ENCODE measurements at regions of chr2 and their contacts with region 1.

Region 1: DNA sequence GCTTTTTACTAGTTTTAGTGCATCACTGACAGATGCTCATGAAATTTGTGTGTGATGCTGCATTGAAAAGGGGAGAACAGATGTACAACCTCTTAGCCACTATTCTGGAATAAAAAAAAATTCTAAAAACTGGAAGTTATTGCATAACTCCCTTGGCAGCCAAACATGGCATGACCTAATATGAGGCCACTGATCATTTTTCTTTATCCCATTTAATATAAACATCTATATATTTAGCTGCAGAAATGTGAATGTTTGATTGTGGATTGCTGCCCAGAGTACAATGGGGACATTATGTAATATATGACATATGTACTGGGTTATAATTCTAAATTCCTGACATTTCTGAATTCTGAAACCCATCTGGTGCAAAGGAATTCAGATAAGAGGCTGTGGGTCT is 86.5 kb downstream of the CDCA7 start:
- DNase-seq: no peak
- ATAC-seq: no peak
- H3K4me3 ChIP-seq: no peak overlapping the region
- H3K27ac ChIP-seq: no peak overlapping the region
- H3K4me1 ChIP-seq: 0 out of 2 replicates have a peak, but pooled peaks cover under 1% of the 10 kb centered on the region
- H3K27me3 ChIP-seq: no peaks in the 10 kb centered on the region
- CTCF ChIP-seq: no peak

Region 2: GRCh38 chr2:173307293-173307692 is 133.9 kb before region 1 on chr2:
- CTCF ChIA-PET with region 1: no interaction called
- POLR2A ChIA-PET with region 1: no interaction called
- intact Hi-C with region 1: no loop called
- DNase-seq: no peak
- ATAC-seq: no peak
- H3K4me3 ChIP-seq: no peak overlapping the region
- H3K27ac ChIP-seq: no peak overlapping the region
- H3K4me1 ChIP-seq: no peaks in the 10 kb centered on the region
- H3K27me3 ChIP-seq: no peaks in the 10 kb centered on the region
- CTCF ChIP-seq: no peak

Region 3: DNA sequence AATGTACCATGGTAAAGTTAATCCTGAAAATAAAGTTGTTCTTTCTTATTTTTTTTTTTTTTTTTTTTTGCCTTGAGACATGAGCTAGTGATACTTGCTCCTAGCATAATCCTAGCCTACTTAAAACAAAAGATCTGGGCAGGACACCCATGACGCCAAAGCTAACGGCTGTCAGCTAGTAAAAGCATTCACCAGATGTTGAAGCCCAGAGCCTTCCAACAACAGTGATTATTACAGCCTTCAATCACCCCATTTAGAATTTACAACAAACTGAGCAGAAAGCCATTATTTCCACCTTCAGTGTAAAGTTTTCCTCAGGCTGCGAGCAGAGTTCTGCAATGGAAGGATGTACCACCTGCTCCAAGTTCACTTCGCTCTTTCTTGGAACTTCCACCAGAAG is 264.4 kb after region 1 on chr2:
- CTCF ChIA-PET with region 1: no interaction called
- POLR2A ChIA-PET with region 1: interaction called, 16 read pairs
- intact Hi-C with region 1: no loop called
- DNase-seq: no peak
- ATAC-seq: no peak
- H3K4me3 ChIP-seq: no peak overlapping the region
- H3K27ac ChIP-seq: no peak overlapping the region
- H3K4me1 ChIP-seq: no peaks in the 10 kb centered on the region
- H3K27me3 ChIP-seq: no peaks in the 10 kb centered on the region
- CTCF ChIP-seq: no peak

Measured in PC-3 (cell line).